Mammary epithelial cell (primary cell): ENCODE measurements at regions of chr17 and their contacts with region 1.

Region 1: DNA sequence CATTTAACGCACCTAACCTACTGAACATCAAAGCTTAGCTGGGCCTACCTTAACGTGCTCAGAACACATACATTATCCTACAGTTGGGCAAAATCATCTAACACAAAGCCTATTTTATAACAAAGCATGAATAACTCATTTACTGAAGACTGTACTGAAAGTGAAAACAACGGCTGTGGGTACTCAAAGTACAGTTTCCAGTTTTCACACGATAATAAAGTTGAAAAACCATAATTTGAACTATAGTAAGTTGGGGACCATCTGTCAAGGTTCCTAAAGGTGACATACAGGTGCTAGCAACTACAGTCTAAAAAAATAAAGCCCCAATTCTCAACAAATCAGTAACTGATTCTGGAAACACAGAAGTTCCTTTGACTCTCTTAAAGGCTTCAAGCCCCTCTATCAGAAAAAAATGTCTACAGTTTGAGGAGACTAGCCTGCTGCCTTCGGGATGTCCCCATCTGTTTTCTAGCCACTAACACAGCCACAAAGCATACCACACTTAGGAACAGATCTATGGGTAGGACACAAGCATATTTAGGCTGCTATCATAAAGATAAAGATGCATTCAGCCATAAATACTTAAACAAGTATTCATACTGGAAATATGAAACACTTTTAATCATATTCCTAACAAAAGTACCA is 71.3 kb downstream of the KANSL1 start:
- DNase-seq: no peak
- H3K4me3 ChIP-seq: no peak overlapping the region
- H3K27ac ChIP-seq: no peak overlapping the region
- H3K4me1 ChIP-seq: no peaks in the 10 kb centered on the region
- H3K27me3 ChIP-seq: no peaks in the 10 kb centered on the region
- CTCF ChIP-seq: no peak

Region 2: GRCh38 chr17:45889579-45889978 is 232.4 kb before region 1 on chr17:
- CTCF ChIA-PET with region 1: no interaction called
- dilution Hi-C with region 1: no loop called
- in situ Hi-C with region 1: no loop called
- intact Hi-C with region 1: no loop called
- DNase-seq: no peak
- H3K4me3 ChIP-seq: no peak overlapping the region
- H3K27ac ChIP-seq: no peak overlapping the region
- H3K4me1 ChIP-seq: peaks cover 2% of the 10 kb centered on the region
- H3K27me3 ChIP-seq: no peaks in the 10 kb centered on the region
- CTCF ChIP-seq: peak; percentile 12 to 14

Region 3: GRCh38 chr17:45902892-45903346 is 219.0 kb before region 1 on chr17:
- CTCF ChIA-PET with region 1: no interaction called
- dilution Hi-C with region 1: no loop called
- in situ Hi-C with region 1: no loop called
- intact Hi-C with region 1: no loop called
- DNase-seq: no peak
- H3K4me3 ChIP-seq: no peak overlapping the region
- H3K27ac ChIP-seq: no peak overlapping the region
- H3K4me1 ChIP-seq: no peaks in the 10 kb centered on the region
- H3K27me3 ChIP-seq: no peaks in the 10 kb centered on the region
- CTCF ChIP-seq: no peak

Region 4: GRCh38 chr17:46089389-46089965 is 32.5 kb before region 1 on chr17:
- CTCF ChIA-PET with region 1: no interaction called
- dilution Hi-C with region 1: loop called (anchors 5 kb)
- in situ Hi-C with region 1: no loop called
- intact Hi-C with region 1: no loop called
- DNase-seq: no peak
- H3K4me3 ChIP-seq: no peak overlapping the region
- H3K27ac ChIP-seq: no peak overlapping the region
- H3K4me1 ChIP-seq: no peaks in the 10 kb centered on the region
- H3K27me3 ChIP-seq: no peaks in the 10 kb centered on the region
- CTCF ChIP-seq: no peak

Region 5: GRCh38 chr17:46179375-46179999 is 57.5 kb after region 1 on chr17:
- CTCF ChIA-PET with region 1: no interaction called
- dilution Hi-C with region 1: loop called (anchors 5 kb)
- in situ Hi-C with region 1: no loop called
- intact Hi-C with region 1: no loop called
- DNase-seq: no peak
- H3K4me3 ChIP-seq: no peak overlapping the region
- H3K27ac ChIP-seq: no peak overlapping the region
- H3K4me1 ChIP-seq: peaks cover 17% of the 10 kb centered on the region
- H3K27me3 ChIP-seq: no peaks in the 10 kb centered on the region
- CTCF ChIP-seq: no peak